PC-9 (cell line): ENCODE measurements at regions of chr11 and their contacts with region 1.

Region 1: GRCh38 chr11:10857709-10858438 is at the start of gene ZBED5:
- DNase-seq: peak; percentile 88 to 91
- H3K4me3 ChIP-seq: peak within 1 kb of the TSS; percentile 96
- H3K27ac ChIP-seq: peak within 1 kb of the TSS; percentile 82
- H3K4me1 ChIP-seq: peaks cover 21% of the 10 kb centered on the region
- H3K27me3 ChIP-seq: no peaks in the 10 kb centered on the region
- CTCF ChIP-seq: no peak; the same call in 1 of the 2 replicates
- total RNA-seq, gene ZBED5: 14.7 and 21.5 TPM in 2 replicates

Region 2: GRCh38 chr11:10770626-10771254 is 87.1 kb before region 1 on chr11:
- CTCF ChIA-PET with region 1: no interaction called
- POLR2A ChIA-PET with region 1: no interaction called
- intact Hi-C with region 1: no loop called
- DNase-seq: peak in 1 of 2 experiments; percentile 27
- H3K4me3 ChIP-seq: no peak overlapping the region
- H3K27ac ChIP-seq: no peak overlapping the region
- H3K4me1 ChIP-seq: no peaks in the 10 kb centered on the region
- H3K27me3 ChIP-seq: no peaks in the 10 kb centered on the region
- CTCF ChIP-seq: peak; percentile 69

Region 3: DNA sequence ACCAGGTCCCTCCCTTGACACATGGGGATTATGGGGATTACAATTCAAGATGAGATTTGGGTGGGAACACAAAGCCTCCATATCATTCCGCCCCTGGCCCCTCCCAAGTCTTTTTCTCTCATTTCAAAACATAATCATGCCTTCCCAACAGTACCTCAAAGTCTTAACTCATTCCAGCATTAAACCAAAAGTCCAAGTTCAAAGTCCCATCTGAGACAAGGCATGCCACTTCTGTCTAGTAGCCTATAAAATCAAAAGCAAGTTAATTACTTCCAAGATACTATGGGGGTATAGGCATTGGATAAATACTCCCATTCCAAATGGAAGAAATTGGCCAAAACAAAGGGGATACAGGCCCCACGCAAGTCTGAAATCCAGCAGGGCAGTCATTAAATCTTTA is 29.5 kb before region 1 on chr11:
- CTCF ChIA-PET with region 1: no interaction called
- POLR2A ChIA-PET with region 1: interaction called, 15 read pairs
- intact Hi-C with region 1: no loop called
- DNase-seq: no peak
- H3K4me3 ChIP-seq: no peak overlapping the region
- H3K27ac ChIP-seq: no peak overlapping the region
- H3K4me1 ChIP-seq: no peaks in the 10 kb centered on the region
- H3K27me3 ChIP-seq: no peaks in the 10 kb centered on the region
- CTCF ChIP-seq: no peak

Region 4: GRCh38 chr11:10899121-10899830 is 41.4 kb after region 1 on chr11:
- CTCF ChIA-PET with region 1: interaction called, 10 read pairs
- POLR2A ChIA-PET with region 1: interaction called, 8 read pairs
- intact Hi-C with region 1: loop called (anchors 2 kb)
- DNase-seq: peak; percentile 44 to 57
- H3K4me3 ChIP-seq: peak overlapping the region; percentile 48
- H3K27ac ChIP-seq: peak overlapping the region; percentile 98
- H3K4me1 ChIP-seq: peaks cover 61% of the 10 kb centered on the region
- H3K27me3 ChIP-seq: no peaks in the 10 kb centered on the region
- CTCF ChIP-seq: no peak

Region 5: GRCh38 chr11:10906513-10906912 is 48.6 kb after region 1 on chr11:
- CTCF ChIA-PET with region 1: no interaction called
- POLR2A ChIA-PET with region 1: interaction called, 8 read pairs
- intact Hi-C with region 1: loop called (anchors 2 kb)
- DNase-seq: peak in 1 of 2 experiments; percentile 44
- H3K4me3 ChIP-seq: no peak overlapping the region
- H3K27ac ChIP-seq: no peak overlapping the region
- H3K4me1 ChIP-seq: peaks cover 52% of the 10 kb centered on the region
- H3K27me3 ChIP-seq: no peaks in the 10 kb centered on the region
- CTCF ChIP-seq: no peak

Region 6: DNA sequence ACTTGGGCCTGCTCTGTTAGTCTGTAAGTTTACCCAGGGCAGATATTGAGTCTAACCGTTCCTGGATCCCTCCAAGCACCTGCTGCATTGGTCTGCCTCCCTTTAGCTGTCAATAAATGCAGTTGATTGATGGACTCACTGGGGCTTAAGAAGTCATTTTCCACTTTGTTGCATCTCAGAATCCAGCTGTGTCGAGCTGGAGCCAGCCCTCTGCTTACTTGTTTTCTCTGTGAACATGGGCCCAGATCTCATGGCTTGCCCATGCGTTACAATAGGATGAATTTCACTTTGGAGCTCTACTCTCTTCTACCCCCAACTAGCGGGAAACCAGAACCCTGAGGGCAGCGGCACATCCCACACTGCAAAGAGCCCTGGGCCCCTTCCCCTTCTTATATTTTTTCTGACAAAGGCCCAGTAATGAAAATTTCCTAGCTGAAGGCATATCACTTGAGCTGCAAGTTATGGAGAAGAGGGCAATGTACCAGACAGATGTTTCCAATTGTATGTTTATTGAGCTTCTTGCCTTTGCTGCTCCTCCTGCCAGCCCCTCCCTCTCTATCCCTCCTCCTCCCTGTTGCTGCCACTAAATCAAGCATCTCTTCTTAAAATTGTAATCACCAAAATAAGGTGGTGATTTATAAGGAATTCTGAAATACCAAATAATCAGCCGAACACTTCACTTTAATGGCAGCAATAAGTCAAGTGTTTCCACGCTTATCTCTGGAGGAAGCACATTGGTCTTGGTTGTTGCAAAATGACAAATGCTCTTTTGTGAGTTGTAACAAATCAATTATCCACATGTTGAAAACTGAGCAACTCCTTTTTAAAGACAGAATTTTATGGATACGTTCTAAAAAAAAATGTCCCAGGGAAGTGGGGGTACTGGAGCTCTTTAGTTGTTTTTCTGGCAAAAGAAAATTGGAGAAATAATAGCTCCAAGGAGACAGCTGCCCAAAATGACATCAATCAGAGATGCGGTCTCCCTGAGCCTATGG is 212.3 kb after region 1 on chr11:
- CTCF ChIA-PET with region 1: no interaction called
- POLR2A ChIA-PET with region 1: no interaction called
- intact Hi-C with region 1: no loop called
- DNase-seq: no peak
- H3K4me3 ChIP-seq: no peak overlapping the region
- H3K27ac ChIP-seq: no peak overlapping the region
- H3K4me1 ChIP-seq: no peaks in the 10 kb centered on the region
- H3K27me3 ChIP-seq: peaks cover 26% of the 10 kb centered on the region
- CTCF ChIP-seq: no peak